Left ventricle myocardium inferior (tissue), 1 donor: ENCODE measurements at regions of chr7 and their contacts with region 1.

Region 1: GRCh38 chr7:35869810-35870209 is 69.0 kb downstream of the SEPTIN7 start:
- DNase-seq: no peak
- H3K4me3 ChIP-seq: no peak overlapping the region
- H3K27ac ChIP-seq: peak overlapping the region; percentile 63
- H3K4me1 ChIP-seq: peaks cover 69% of the 10 kb centered on the region
- H3K27me3 ChIP-seq: no peaks in the 10 kb centered on the region
- CTCF ChIP-seq: no peak

Region 2: DNA sequence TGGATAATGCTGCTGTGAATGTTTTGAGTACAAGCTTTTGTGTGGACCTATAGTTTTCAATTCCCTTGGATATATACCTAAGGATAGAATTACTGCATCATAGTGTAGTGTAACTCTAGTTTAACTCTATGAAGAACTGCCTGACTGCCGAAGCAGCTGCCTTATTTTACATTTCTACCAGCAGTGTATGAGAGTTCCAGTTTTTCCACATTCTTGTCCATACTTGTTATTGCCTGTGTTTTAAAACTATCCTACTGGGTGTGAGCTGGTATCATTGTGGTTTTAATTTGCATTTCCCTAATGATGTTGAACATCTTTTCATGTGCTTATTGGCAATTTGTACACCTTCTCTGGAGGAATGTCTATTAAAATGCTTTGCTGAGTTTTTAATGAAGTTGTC is 53.3 kb before region 1 on chr7:
- intact Hi-C with region 1: loop called (anchors 10 kb)
- DNase-seq: no peak
- H3K4me3 ChIP-seq: no peak overlapping the region
- H3K27ac ChIP-seq: no peak overlapping the region
- H3K4me1 ChIP-seq: peaks cover 37% of the 10 kb centered on the region
- H3K27me3 ChIP-seq: no peaks in the 10 kb centered on the region
- CTCF ChIP-seq: no peak